Transverse colon (tissue), 4 donors: ENCODE measurements at regions of chr11 and their contacts with region 1.

Region 1: GRCh38 chr11:44451706-44452105 is 113.8 kb upstream of the CD82 start:
- DNase-seq: no peak
- H3K4me3 ChIP-seq: no peak overlapping the region
- H3K27ac ChIP-seq: no peak overlapping the region
- H3K4me1 ChIP-seq: no peaks in the 10 kb centered on the region
- H3K27me3 ChIP-seq: no peaks in the 10 kb centered on the region
- CTCF ChIP-seq: no peak
- EP300 ChIP-seq: no peak
- POLR2A ChIP-seq: no peak

Region 2: DNA sequence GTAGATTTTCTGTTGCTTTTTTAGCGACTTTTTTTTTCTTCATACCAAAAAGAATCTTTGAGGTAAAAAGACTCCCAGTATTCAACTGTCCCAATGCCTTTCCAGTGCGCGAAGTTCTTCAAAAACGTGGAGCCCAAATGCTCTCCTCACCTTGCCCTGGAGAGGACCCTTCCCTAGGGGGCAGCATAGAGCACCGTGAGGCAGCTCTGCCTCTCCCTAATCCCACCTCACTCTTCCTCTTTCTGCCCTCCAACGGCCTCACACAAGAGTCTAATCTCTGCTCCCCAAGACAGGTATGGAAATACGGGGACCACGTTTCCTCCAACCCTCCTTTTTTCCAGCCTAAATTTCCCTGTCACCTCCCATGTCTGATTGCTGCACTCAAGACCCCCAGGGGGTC is 24.3 kb before region 1 on chr11:
- in situ Hi-C with region 1: no loop called
- intact Hi-C with region 1: loop called (anchors 1 kb)
- DNase-seq: no peak
- H3K4me3 ChIP-seq: no peak overlapping the region
- H3K27ac ChIP-seq: no peak overlapping the region
- H3K4me1 ChIP-seq: no peaks in the 10 kb centered on the region
- H3K27me3 ChIP-seq: peaks cover 8% of the 10 kb centered on the region
- CTCF ChIP-seq: no peak
- EP300 ChIP-seq: no peak
- POLR2A ChIP-seq: no peak